Heart left ventricle (tissue), 16 donors: ENCODE measurements at regions of chr11 and their contacts with region 1.

Region 1: GRCh38 chr11:45846974-45847910 is at the start of gene CRY2:
- DNase-seq: peak; percentile 99 to 100 (median 99)
- ATAC-seq: peak; percentile 94 to 97 (median 95)
- H3K4me3 ChIP-seq: peak within 1 kb of the TSS; percentile 73 to 97 (median 90)
- H3K27ac ChIP-seq: peak within 1 kb of the TSS; percentile 83 to 99 (median 96)
- H3K4me1 ChIP-seq: peaks cover 8 to 65% (median 44%) of the 10 kb centered on the region in 12 donors
- H3K27me3 ChIP-seq: no peaks in the 10 kb centered on the region
- CTCF ChIP-seq: no peak
- POLR2A ChIP-seq: peak; percentile 90 to 98
- total RNA-seq, gene CRY2: 40.2 to 132 (median 72.7) TPM

Region 2: DNA sequence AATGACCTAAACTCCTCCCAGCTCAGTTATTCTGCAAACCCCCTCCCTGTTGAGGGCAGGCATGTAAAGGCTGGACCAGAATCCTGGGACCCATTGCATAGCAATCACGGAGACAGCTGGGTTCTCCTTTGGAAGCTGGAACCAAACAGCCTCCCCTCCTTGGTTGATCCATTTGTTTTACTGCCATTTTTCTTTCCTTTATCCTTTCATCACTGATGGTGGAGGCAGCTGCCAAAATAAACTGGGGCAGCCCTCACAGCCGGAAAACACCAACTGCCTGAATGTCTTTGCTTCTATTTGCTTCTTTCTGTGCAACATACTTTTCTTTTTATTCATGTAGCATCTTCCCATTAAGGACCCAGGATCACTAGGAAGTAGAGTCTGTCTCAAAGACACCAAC is 411.1 kb before region 1 on chr11:
- intact Hi-C with region 1: no loop called
- DNase-seq: no peak
- ATAC-seq: no peak
- H3K4me3 ChIP-seq: no peak overlapping the region
- H3K27ac ChIP-seq: no peak overlapping the region
- H3K4me1 ChIP-seq: no peaks in the 10 kb centered on the region
- H3K27me3 ChIP-seq: peaks cover 0 to 19% (median 0%) of the 10 kb centered on the region in 9 donors
- CTCF ChIP-seq: no peak
- POLR2A ChIP-seq: no peak

Region 3: GRCh38 chr11:45804761-45805304 is 42.4 kb before region 1 on chr11 and contains the start of gene SLC35C1:
- intact Hi-C with region 1: loop called in 4 of 10 experiments (anchors 1 to 5 kb)
- DNase-seq: peak; percentile 98
- ATAC-seq: peak; percentile 95 to 97 (median 96)
- H3K4me3 ChIP-seq: peak within 1 kb of the TSS; percentile 63 to 99 (median 84)
- H3K27ac ChIP-seq: peak within 1 kb of the TSS; percentile 64 to 94 (median 90)
- H3K4me1 ChIP-seq: peaks cover 6 to 52% (median 33%) of the 10 kb centered on the region in 12 donors
- H3K27me3 ChIP-seq: no peaks in the 10 kb centered on the region
- CTCF ChIP-seq: peak in 10 of 12 donors; percentile 9 to 49 (median 28)
- POLR2A ChIP-seq: peak; percentile 76 to 86
- total RNA-seq, gene SLC35C1: 5.5 to 11.3 (median 7.8) TPM

Region 4: GRCh38 chr11:45859661-45860140 is 12.5 kb after region 1 on chr11:
- intact Hi-C with region 1: loop called in 3 of 10 experiments (anchors 1 kb)
- DNase-seq: peak; percentile 94 to 96 (median 95)
- ATAC-seq: peak; percentile 80 to 87 (median 84)
- H3K4me3 ChIP-seq: no peak overlapping the region
- H3K27ac ChIP-seq: peak overlapping the region; percentile 58 to 99 (median 90)
- H3K4me1 ChIP-seq: peaks cover 23 to 75% (median 62%) of the 10 kb centered on the region in 12 donors
- H3K27me3 ChIP-seq: no peaks in the 10 kb centered on the region
- CTCF ChIP-seq: no peak
- POLR2A ChIP-seq: peak in 1 of 2 donors; percentile 53

Region 5: DNA sequence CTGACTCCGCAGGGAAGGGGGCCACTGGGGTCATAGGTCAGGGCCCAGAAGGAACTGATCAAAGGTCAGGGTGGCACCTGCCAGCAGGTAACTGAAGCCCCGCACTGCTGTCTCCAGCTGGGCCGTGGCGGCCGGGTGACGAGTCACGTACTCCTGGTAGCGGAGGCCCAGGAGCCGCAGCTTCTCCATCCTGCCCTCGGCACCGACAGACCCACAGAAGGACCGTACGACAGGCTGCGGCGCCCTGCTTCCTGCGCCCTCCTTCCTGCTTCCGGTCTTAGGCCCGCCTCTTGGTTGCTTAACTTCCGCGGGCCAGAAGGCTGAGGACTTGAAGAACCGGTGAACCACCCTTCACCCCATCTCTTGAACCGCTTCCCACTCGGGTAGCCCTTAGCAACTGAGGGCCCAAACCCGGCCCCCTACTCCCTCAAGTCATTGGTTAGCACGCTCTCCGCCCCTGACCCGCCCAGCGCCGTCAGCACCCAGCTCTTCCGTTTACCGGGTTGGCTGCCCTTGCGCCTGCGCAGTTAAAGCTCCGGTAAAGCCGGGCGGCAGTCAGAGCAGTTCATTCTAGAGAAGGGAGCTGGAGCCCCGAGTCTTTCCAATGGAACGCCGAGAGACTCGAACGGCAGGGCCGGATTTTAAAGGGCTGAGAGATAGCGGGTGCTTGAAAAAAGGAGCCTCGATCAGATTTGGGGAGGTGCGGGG is 70.5 kb after region 1 on chr11 and contains the start of gene PEX16:
- intact Hi-C with region 1: loop called in 7 of 10 experiments (anchors 1 to 5 kb)
- DNase-seq: peak; percentile 97 to 99 (median 98)
- ATAC-seq: peak; percentile 91 to 95 (median 94)
- H3K4me3 ChIP-seq: peak within 1 kb of the TSS; percentile 75 to 100 (median 94)
- H3K27ac ChIP-seq: peak within 1 kb of the TSS; percentile 77 to 97 (median 90)
- H3K4me1 ChIP-seq: peaks cover 3 to 57% (median 31%) of the 10 kb centered on the region in 12 donors
- H3K27me3 ChIP-seq: peaks cover 7 to 17% (median 10%) of the 10 kb centered on the region in 9 donors
- CTCF ChIP-seq: no peak
- POLR2A ChIP-seq: peak in 1 of 2 donors; percentile 87
- total RNA-seq, gene PEX16: 10.4 to 20.0 (median 14.6) TPM

Region 6: DNA sequence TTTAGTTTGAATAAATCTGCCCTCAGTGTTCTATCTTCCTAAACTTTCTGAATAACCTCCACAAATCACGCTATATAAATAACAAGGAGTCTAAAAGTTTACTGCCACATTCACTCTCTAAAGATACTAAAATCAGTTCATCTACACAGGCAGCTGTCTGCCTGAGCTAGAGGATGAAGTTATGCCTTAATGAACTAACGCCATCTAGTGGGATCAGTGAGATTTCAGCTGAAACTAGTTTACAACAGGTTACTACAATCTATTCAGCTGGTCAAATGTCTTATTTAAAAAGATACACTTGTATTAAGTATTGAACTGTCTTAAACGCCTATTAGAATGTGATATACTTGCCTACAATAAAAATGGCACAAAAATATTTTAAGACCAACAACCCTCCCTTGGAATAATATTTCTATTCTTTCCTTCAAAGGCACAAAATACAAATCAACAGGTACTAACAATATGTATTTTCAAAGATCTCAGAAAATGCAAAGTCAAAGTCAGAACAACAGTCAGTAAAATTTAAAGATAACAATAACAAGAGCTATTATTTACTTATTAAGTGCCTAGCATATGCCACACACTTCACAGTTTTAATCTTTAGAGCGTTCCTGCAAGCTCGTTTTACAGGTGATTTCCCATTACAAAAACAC is 159.3 kb after region 1 on chr11:
- intact Hi-C with region 1: loop called in 8 of 10 experiments (anchors 2 to 10 kb)
- DNase-seq: peak in 1 of 5 donors; percentile 26
- ATAC-seq: peak; percentile 58 to 83 (median 76)
- H3K4me3 ChIP-seq: no peak overlapping the region
- H3K27ac ChIP-seq: no peak overlapping the region
- H3K4me1 ChIP-seq: peaks cover 0 to 31% (median 10%) of the 10 kb centered on the region in 12 donors
- H3K27me3 ChIP-seq: no peaks in the 10 kb centered on the region
- CTCF ChIP-seq: peak; percentile 67 to 85 (median 79)
- POLR2A ChIP-seq: no peak

Region 7: GRCh38 chr11:46017341-46017740 is 170.1 kb after region 1 on chr11:
- intact Hi-C with region 1: no loop called
- DNase-seq: no peak
- ATAC-seq: no peak
- H3K4me3 ChIP-seq: no peak overlapping the region
- H3K27ac ChIP-seq: no peak overlapping the region
- H3K4me1 ChIP-seq: no peaks in the 10 kb centered on the region
- H3K27me3 ChIP-seq: no peaks in the 10 kb centered on the region
- CTCF ChIP-seq: no peak
- POLR2A ChIP-seq: no peak